ENCODE measurements at regions of chr18 and their contacts with region 1.

Region 1: GRCh38 chr18:34661464-34662111 is 48.5 kb upstream of the DTNA start:
- DNase-seq: no peak
- ATAC-seq: peak; percentile 90
- H3K4me3 ChIP-seq: no peak overlapping the region
- H3K27ac ChIP-seq: no peak overlapping the region
- H3K4me1 ChIP-seq: no peaks in the 10 kb centered on the region
- H3K27me3 ChIP-seq: no peaks in the 10 kb centered on the region; a peak in 1 of 4 replicates
- CTCF ChIP-seq: peak; percentile 69 to 76 (median 75)
- EP300 ChIP-seq: no peak
- POLR2A ChIP-seq: no peak
- RAD21 ChIP-seq: peak; percentile 56

Region 2: DNA sequence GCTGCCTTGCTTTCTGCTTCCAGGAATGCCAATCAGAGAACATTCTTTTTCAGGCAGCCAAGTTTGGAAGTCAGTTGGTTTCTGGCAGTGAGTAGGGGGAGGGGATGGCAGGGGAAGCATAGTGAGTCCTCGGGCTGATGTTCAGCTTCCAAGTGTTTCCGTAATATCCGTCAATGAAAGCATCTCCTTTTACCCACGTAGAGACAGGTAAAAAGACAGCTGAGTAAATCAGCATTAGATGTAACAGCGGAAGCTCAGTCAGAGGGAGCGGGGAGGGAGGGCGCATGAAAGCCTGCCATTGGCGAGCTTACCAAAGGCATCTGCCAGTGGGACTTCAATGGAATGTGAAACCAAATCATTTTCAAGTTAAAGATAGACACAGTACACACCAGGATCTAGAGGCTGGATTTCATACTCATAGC is 68.6 kb before region 1 on chr18:
- CTCF ChIA-PET with region 1: interaction called, 26 read pairs
- POLR2A ChIA-PET with region 1: no interaction called
- RAD21 ChIA-PET with region 1: interaction called, 9 read pairs
- SMC1A ChIA-PET with region 1: interaction called, 10 read pairs
- in situ Hi-C with region 1: no loop called
- intact Hi-C with region 1: no loop called
- DNase-seq: no peak
- ATAC-seq: peak; percentile 54
- H3K4me3 ChIP-seq: no peak overlapping the region
- H3K27ac ChIP-seq: no peak overlapping the region
- H3K4me1 ChIP-seq: no peaks in the 10 kb centered on the region
- H3K27me3 ChIP-seq: no peaks in the 10 kb centered on the region; a peak in 1 of 4 replicates
- CTCF ChIP-seq: no peak
- EP300 ChIP-seq: no peak
- POLR2A ChIP-seq: no peak
- RAD21 ChIP-seq: no peak

Region 3: GRCh38 chr18:34647251-34647650 is 14.3 kb before region 1 on chr18:
- CTCF ChIA-PET with region 1: interaction called, 76 read pairs
- POLR2A ChIA-PET with region 1: interaction called, 4 read pairs
- RAD21 ChIA-PET with region 1: interaction called, 9 read pairs
- SMC1A ChIA-PET with region 1: interaction called, 44 read pairs
- in situ Hi-C with region 1: no loop called
- intact Hi-C with region 1: no loop called
- DNase-seq: no peak
- ATAC-seq: peak; percentile 90
- H3K4me3 ChIP-seq: no peak overlapping the region
- H3K27ac ChIP-seq: no peak overlapping the region
- H3K4me1 ChIP-seq: no peaks in the 10 kb centered on the region
- H3K27me3 ChIP-seq: no peaks in the 10 kb centered on the region
- CTCF ChIP-seq: no peak
- EP300 ChIP-seq: no peak
- POLR2A ChIP-seq: no peak
- RAD21 ChIP-seq: no peak

Region 4: DNA sequence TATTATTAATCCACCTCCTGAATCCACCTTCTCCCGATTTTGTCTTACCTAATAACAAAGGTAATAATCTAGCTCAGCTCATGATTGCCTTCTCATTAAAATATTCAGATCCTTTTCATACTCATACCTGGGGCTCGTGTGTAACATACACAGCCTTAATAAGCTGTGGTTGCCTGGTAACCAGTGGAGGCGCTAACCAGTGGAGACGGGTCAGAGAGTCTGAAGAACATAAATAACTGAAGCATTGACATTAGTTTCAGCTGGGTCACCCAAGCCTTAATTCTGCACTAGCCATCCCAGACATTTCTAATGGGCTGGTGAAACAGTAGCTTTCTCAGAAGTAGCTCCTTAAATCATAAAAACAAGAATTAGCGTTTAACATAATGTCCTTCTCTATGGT is 33.7 kb after region 1 on chr18:
- CTCF ChIA-PET with region 1: interaction called, 50 read pairs
- POLR2A ChIA-PET with region 1: interaction called, 5 read pairs
- RAD21 ChIA-PET with region 1: interaction called, 15 read pairs
- SMC1A ChIA-PET with region 1: interaction called, 54 read pairs
- in situ Hi-C with region 1: no loop called
- intact Hi-C with region 1: no loop called
- DNase-seq: no peak
- ATAC-seq: peak; percentile 78
- H3K4me3 ChIP-seq: no peak overlapping the region
- H3K27ac ChIP-seq: no peak overlapping the region
- H3K4me1 ChIP-seq: no peaks in the 10 kb centered on the region
- H3K27me3 ChIP-seq: no peaks in the 10 kb centered on the region
- CTCF ChIP-seq: no peak
- EP300 ChIP-seq: no peak
- POLR2A ChIP-seq: no peak
- RAD21 ChIP-seq: no peak

Region 5: GRCh38 chr18:34723143-34723542 is 61.6 kb after region 1 on chr18:
- CTCF ChIA-PET with region 1: interaction called, 51 read pairs
- POLR2A ChIA-PET with region 1: no interaction called
- RAD21 ChIA-PET with region 1: interaction called, 29 read pairs
- SMC1A ChIA-PET with region 1: interaction called, 50 read pairs
- in situ Hi-C with region 1: no loop called
- intact Hi-C with region 1: no loop called
- DNase-seq: no peak
- ATAC-seq: no peak
- H3K4me3 ChIP-seq: no peak overlapping the region
- H3K27ac ChIP-seq: no peak overlapping the region
- H3K4me1 ChIP-seq: no peaks in the 10 kb centered on the region
- H3K27me3 ChIP-seq: no peaks in the 10 kb centered on the region
- CTCF ChIP-seq: no peak
- EP300 ChIP-seq: no peak
- POLR2A ChIP-seq: no peak
- RAD21 ChIP-seq: no peak

Region 6: DNA sequence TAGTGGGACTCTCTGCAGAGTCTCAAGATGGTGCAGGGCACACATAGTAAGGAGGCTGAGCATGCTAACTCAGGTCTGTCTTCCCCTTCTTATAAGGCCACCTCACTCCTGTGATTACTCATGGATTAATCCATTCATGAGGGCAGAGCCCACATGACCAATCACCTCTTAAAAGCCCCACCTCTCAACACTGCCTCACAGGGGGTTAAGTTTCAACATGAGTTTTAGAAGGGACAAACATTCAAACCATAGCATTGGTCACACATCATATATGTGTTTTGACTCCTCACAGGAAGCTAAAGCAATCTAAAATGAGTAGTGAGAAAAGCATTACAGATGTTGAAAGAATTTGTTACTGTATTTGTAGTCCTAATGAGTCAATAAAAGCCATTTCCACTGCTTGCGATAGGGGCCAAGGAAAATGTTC is 106.0 kb after region 1 on chr18:
- CTCF ChIA-PET with region 1: interaction called, 21 read pairs
- POLR2A ChIA-PET with region 1: no interaction called
- RAD21 ChIA-PET with region 1: interaction called, 4 read pairs
- SMC1A ChIA-PET with region 1: interaction called, 13 read pairs
- in situ Hi-C with region 1: no loop called
- intact Hi-C with region 1: no loop called
- DNase-seq: no peak
- ATAC-seq: peak; percentile 89
- H3K4me3 ChIP-seq: no peak overlapping the region
- H3K27ac ChIP-seq: no peak overlapping the region
- H3K4me1 ChIP-seq: no peaks in the 10 kb centered on the region
- H3K27me3 ChIP-seq: no peaks in the 10 kb centered on the region
- CTCF ChIP-seq: no peak
- EP300 ChIP-seq: no peak
- POLR2A ChIP-seq: no peak
- RAD21 ChIP-seq: no peak

Region 7: DNA sequence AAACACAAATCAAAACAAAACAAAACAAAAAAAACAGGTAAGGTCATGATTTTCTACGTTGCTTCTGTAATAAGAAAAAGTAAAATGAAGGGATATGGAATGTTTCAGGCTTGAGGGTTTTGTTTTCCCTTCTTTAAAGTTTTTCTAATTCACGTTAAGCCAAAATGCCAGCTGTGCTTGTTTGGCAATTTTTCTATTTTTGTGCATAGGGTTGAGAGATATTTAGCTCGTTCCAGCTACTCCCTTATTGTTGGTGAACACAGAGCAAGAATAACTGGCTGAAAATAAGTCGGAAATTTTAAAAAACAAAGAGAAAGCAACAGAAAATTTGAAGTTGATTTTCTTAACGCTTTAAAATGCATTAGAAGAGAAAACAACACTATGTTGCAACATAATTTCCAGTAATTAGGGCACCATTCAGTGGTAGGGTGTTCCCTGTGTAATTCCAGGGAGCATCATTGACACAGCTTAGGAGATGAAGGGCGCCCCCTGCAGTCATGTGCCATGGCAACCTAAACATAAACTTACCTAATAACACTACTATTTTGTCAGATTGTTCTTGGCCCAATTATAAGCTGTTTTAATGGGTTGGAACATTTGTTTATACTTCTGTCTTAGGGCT is 148.0 kb after region 1 on chr18:
- CTCF ChIA-PET with region 1: interaction called, 21 read pairs
- POLR2A ChIA-PET with region 1: no interaction called
- RAD21 ChIA-PET with region 1: interaction called, 10 read pairs
- SMC1A ChIA-PET with region 1: interaction called, 11 read pairs
- in situ Hi-C with region 1: no loop called
- intact Hi-C with region 1: no loop called
- DNase-seq: no peak
- ATAC-seq: no peak
- H3K4me3 ChIP-seq: no peak overlapping the region
- H3K27ac ChIP-seq: no peak overlapping the region
- H3K4me1 ChIP-seq: no peaks in the 10 kb centered on the region
- H3K27me3 ChIP-seq: no peaks in the 10 kb centered on the region
- CTCF ChIP-seq: peak in 1 of 3 experiments; percentile 14; a peak in 1 of 6 replicates
- EP300 ChIP-seq: no peak
- POLR2A ChIP-seq: no peak
- RAD21 ChIP-seq: no peak

Measured in GM12878 (cell line).